ENCODE measurements at regions of chr17 and their contacts with region 1.

Region 1: GRCh38 chr17:64145757-64146417 is 15.9 kb upstream of the ERN1 start:
- DNase-seq: peak; percentile 96
- H3K4me3 ChIP-seq: peak overlapping the region; percentile 73 to 80
- H3K27ac ChIP-seq: peak overlapping the region; percentile 65 to 97
- H3K4me1 ChIP-seq: peaks cover 11 to 28% of the 10 kb centered on the region in 2 experiments
- H3K27me3 ChIP-seq: no peaks in the 10 kb centered on the region
- CTCF ChIP-seq: no peak; the same call in 1 of the 2 replicates
- EP300 ChIP-seq: no peak
- RAD21 ChIP-seq: no peak

Region 2: DNA sequence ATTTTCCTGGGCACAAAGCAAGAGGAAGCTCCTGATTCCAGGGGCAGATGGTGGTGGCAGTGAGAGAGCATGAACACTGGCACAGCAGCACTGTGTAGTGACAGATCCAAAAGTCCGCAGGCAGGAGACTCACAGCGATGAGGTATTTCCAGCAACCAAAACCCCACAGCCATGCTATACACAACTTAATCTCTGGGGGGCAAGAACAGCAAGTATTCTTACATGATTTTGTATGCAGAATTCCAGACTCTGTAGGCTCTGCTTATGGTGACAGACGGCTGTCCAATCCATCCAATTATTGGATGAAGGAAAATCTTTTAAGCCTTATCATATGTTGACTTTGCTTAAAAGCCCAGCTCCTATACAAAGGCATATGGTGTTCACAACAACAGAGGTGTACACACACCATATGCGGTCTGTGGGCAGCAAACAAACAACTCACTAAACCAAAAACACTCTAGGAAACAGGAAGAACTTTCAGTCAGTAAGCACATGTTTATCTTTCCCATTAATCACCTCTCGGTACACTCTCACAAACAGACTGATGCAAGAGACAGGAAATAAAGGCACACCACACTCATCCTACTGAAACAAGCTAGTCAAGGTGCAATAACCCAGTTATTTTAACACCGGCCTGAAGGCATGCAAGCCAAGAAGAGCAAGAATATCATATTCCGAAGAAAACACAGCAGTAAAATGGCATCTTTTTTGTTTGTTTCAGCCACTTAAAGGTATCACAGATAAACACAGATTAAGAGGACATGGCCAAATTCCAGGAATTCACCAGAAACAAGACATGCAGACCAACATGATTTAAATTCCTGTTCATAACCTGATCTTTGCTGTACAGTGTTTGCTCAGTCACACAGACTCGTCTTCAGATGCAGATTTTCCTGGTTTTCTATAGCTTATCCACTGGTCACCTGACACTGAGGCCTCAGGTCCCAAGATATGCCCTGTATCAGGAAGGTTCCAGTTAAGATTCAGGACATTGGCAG is 63.8 kb before region 1 on chr17:
- CTCF ChIA-PET with region 1: interaction called, 4 read pairs
- POLR2A ChIA-PET with region 1: interaction called, 12 read pairs
- DNase-seq: peak; percentile 76
- H3K4me3 ChIP-seq: no peak overlapping the region
- H3K27ac ChIP-seq: peak overlapping the region; percentile 14 to 87; a peak in 3 of 4 replicates
- H3K4me1 ChIP-seq: peaks cover 12 to 26% of the 10 kb centered on the region in 2 experiments
- H3K27me3 ChIP-seq: no peaks in the 10 kb centered on the region
- CTCF ChIP-seq: peak; percentile 15; the same call in 1 of the 2 replicates
- EP300 ChIP-seq: no peak
- RAD21 ChIP-seq: peak; percentile 46

Region 3: GRCh38 chr17:64164596-64165285 is 18.9 kb after region 1 on chr17:
- CTCF ChIA-PET with region 1: interaction called, 12 read pairs
- POLR2A ChIA-PET with region 1: interaction called, 26 read pairs
- DNase-seq: peak; percentile 46
- H3K4me3 ChIP-seq: no peak overlapping the region
- H3K27ac ChIP-seq: peak overlapping the region in 1 of 2 experiments; percentile 88; a peak in 2 of 4 replicates
- H3K4me1 ChIP-seq: peaks cover 0 to 38% of the 10 kb centered on the region in 2 experiments; a peak in 2 of 4 replicates
- H3K27me3 ChIP-seq: no peaks in the 10 kb centered on the region
- CTCF ChIP-seq: no peak
- EP300 ChIP-seq: no peak; a peak in 1 of 4 replicates
- RAD21 ChIP-seq: no peak

Region 4: DNA sequence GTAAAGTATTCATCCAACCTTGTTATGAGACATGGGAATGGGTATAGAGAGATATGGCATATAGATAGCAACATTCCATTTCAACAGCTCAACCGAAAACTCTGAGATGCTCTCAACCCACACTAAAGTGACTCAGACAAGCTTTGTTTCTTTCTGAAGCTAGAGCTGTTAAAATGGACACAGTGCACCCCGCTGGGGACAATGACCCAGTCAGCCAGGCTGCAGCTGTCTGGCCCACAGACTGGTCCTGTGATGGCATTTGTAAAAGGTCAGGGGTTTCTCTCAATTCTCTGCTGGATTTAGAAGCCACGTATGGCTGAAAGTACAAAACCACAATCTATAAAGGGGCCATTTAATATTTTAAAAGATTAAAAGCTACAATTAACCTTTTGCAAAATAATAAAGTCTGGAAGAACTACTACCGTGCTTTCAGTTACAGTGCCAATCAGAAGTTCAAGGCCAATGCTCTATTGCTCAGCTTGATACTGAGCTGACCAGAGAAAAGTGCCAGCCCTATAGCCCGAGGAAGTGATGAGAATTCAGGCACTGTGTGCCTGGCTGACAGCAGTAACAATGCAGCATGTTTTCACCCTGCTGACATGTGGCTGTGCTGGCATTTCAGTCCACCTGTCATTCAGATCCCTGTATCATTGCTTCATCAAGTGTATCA is 56.9 kb after region 1 on chr17:
- CTCF ChIA-PET with region 1: interaction called, 4 read pairs
- POLR2A ChIA-PET with region 1: interaction called, 12 read pairs
- DNase-seq: peak; percentile 47
- H3K4me3 ChIP-seq: 0 out of 4 replicates have a peak overlapping the region, but pooled peaks of 1 of the 2 experiments have one; percentile 15
- H3K27ac ChIP-seq: peak overlapping the region; percentile 74 to 83
- H3K4me1 ChIP-seq: peaks cover 40 to 50% of the 10 kb centered on the region in 2 experiments
- H3K27me3 ChIP-seq: no peaks in the 10 kb centered on the region
- CTCF ChIP-seq: peak; percentile 28
- EP300 ChIP-seq: peak in 1 of 2 experiments; percentile 88; a peak in 2 of 4 replicates
- RAD21 ChIP-seq: peak; percentile 33; the same call in 1 of the 2 replicates

Region 5: GRCh38 chr17:64256913-64257807 is 111.3 kb after region 1 on chr17:
- CTCF ChIA-PET with region 1: interaction called, 4 read pairs
- POLR2A ChIA-PET with region 1: interaction called, 50 read pairs
- DNase-seq: no peak
- H3K4me3 ChIP-seq: no peak overlapping the region
- H3K27ac ChIP-seq: peak overlapping the region; percentile 32 to 55; a peak in 3 of 4 replicates
- H3K4me1 ChIP-seq: peaks cover 48 to 55% of the 10 kb centered on the region in 2 experiments; a peak in 3 of 4 replicates
- H3K27me3 ChIP-seq: no peaks in the 10 kb centered on the region
- CTCF ChIP-seq: no peak
- EP300 ChIP-seq: peak in 1 of 2 experiments; percentile 59; a peak in 1 of 4 replicates
- RAD21 ChIP-seq: no peak

Region 6: DNA sequence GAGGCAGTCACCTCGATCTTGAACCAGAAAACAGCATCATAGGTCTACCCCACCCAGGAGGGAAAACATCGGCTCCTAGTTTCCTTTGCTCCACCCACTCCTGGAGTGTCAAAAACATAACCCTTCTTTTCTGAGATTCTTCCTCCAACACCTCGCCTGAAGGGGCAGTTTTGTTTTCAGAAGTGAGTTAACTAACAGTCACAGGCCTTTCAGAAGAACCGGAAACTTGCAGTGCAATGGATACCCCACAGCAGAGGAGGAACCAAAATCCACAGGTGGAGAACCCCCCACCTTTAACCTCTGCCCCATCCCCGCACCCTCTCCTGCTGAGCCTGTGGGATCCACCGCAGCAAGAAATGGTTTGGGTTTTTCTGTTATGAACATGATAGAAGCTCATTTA is 125.0 kb after region 1 on chr17:
- CTCF ChIA-PET with region 1: interaction called, 12 read pairs
- POLR2A ChIA-PET with region 1: interaction called, 14 read pairs
- DNase-seq: no peak
- H3K4me3 ChIP-seq: no peak overlapping the region
- H3K27ac ChIP-seq: no peak overlapping the region
- H3K4me1 ChIP-seq: peaks cover 0 to 7% of the 10 kb centered on the region in 2 experiments; a peak in 1 of 4 replicates
- H3K27me3 ChIP-seq: no peaks in the 10 kb centered on the region
- CTCF ChIP-seq: no peak
- EP300 ChIP-seq: no peak
- RAD21 ChIP-seq: no peak

Region 7: DNA sequence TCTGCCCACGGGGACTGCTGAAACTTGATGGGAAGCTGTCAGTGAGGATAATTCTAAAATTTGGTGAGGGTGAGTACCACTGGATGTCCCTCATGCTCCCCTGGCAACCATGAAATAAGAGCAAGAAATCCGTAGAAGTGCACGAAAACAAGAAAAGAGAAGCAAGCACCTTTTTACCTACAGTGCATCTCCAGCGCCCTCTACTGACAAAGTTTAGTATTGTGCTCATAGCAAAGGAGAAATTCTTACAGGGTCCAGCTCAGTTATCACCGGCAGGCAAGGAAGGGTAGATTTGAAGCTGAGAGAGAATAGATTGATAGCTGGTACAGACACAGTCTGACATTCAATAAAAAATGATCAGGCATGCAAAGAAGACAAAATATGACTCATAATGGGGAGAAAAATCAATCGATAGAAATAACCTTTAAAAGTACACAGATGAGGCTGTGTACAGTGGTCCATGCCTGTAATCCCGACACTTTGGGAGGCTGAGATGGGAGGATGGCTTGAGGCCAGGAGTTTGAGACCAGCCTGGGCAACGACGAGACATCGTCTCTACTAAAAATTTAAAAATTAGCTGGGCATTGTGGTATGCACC is 145.5 kb after region 1 on chr17:
- CTCF ChIA-PET with region 1: interaction called, 13 read pairs
- POLR2A ChIA-PET with region 1: interaction called, 6 read pairs
- DNase-seq: no peak
- H3K4me3 ChIP-seq: no peak overlapping the region
- H3K27ac ChIP-seq: no peak overlapping the region
- H3K4me1 ChIP-seq: no peaks in the 10 kb centered on the region
- H3K27me3 ChIP-seq: no peaks in the 10 kb centered on the region
- CTCF ChIP-seq: peak; percentile 58
- EP300 ChIP-seq: no peak
- RAD21 ChIP-seq: peak; percentile 26